H1 (cell line): ENCODE measurements at regions of chr17 and their contacts with region 1.

Region 1: GRCh38 chr17:32281011-32281451 is 15.4 kb downstream of the RHBDL3 start:
- DNase-seq: peak in 1 of 2 experiments; percentile 82
- H3K4me3 ChIP-seq: peak overlapping the region in 2 of 4 experiments; percentile 20 to 22; a peak in 1 of 8 replicates
- H3K27ac ChIP-seq: no peak overlapping the region
- H3K4me1 ChIP-seq: peaks cover 8 to 42% (median 32%) of the 10 kb centered on the region in 4 experiments
- H3K27me3 ChIP-seq: peaks cover 0 to 2% (median 0%) of the 10 kb centered on the region in 4 experiments; a peak in 2 of 7 replicates
- CTCF ChIP-seq: no peak
- EP300 ChIP-seq: no peak
- POLR2A ChIP-seq: no peak; a peak in 1 of 3 replicates
- RAD21 ChIP-seq: no peak

Region 2: GRCh38 chr17:32265192-32265923 is 15.7 kb before region 1 on chr17 and contains the start of gene RHBDL3:
- CTCF ChIA-PET with region 1: interaction called, 15 read pairs
- POLR2A ChIA-PET with region 1: interaction called, 15 read pairs
- DNase-seq: no peak
- H3K4me3 ChIP-seq: peak within 1 kb of the TSS; percentile 42 to 87 (median 67)
- H3K27ac ChIP-seq: no peak within 1 kb of the TSS
- H3K4me1 ChIP-seq: peaks cover 7 to 24% (median 16%) of the 10 kb centered on the region in 4 experiments
- H3K27me3 ChIP-seq: peaks cover 0 to 34% (median 29%) of the 10 kb centered on the region in 4 experiments; a peak in 5 of 7 replicates
- CTCF ChIP-seq: no peak
- EP300 ChIP-seq: no peak
- POLR2A ChIP-seq: no peak
- RAD21 ChIP-seq: no peak
- total RNA-seq, gene RHBDL3: 11.8 and 12.2 TPM in 2 replicates